ENCODE measurements at regions of chr1 and their contacts with region 1.

Region 1: DNA sequence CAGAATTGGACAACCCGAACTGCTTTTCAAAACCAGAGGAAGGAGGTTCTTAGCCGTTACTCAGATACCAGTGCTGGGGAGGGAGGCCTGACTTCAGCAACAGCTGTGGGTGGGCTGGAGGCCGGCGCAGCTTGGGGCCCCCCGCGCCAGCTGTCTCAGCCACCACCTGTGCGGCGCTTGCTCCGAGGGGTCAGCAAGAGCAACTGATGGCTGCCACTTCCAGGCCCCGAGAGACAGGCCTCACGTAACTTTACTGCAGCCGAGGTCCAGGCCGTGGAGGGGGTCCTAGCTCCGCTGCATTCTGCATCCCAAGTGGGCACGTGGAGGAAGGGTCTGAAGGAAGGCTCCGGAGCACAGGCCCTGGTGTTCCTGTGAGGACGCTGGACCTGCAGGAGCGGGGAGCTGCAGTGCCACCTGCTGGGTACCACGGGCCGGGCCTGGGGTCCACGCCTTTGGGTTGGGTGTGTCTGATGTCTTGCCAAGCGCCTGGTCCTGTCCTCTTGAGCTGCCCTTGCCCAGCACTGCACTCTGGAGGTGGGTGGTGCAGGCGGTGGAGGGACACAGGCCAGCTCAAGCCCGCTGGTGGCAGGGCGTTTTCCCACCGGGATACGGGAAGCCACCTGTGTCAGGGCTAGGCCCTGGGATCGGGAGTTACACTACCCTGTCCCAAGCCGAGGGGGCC is 9.8 kb downstream of the THAP3 start:
- DNase-seq: peak; percentile 80 to 85 (median 84)
- ATAC-seq: peak; percentile 92 to 94 (median 94)
- H3K4me3 ChIP-seq: no peak overlapping the region
- H3K27ac ChIP-seq: no peak overlapping the region
- H3K4me1 ChIP-seq: no peaks in the 10 kb centered on the region
- H3K27me3 ChIP-seq: no peaks in the 10 kb centered on the region
- CTCF ChIP-seq: peak; percentile 59 to 78 (median 68)
- POLR2A ChIP-seq: no peak

Region 2: DNA sequence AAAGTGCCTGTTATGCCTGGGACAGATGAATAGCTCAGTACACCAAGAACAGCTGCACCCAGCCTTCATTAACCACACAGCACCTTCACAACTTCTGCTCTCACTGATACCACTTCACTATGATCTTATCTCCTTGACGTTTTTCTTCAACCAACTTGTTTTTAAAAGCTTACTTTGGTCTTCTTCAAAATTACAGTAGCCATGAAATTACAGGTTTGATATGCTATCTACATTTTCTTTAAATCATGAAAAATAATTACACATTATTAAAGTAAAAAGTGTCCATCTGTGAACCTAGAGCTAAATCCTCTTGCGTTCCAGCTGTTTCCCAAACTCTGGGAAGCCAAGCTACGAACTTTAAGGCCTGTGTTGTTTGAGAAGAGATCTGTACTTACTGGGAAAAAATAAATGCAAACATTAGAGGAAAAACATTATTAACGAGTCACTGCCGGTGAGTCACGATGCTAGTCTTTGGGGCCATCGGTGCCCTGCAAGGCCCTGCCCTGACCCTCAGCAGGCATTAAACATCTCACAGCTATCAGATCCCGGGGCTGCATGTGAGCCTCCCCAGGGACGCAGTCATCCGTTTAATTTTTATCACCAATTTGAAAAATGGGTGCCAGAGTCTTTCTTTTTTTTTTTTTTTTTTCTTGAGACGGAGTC is 317.3 kb before region 1 on chr1:
- intact Hi-C with region 1: no loop called
- DNase-seq: no peak
- ATAC-seq: no peak
- H3K4me3 ChIP-seq: no peak overlapping the region
- H3K27ac ChIP-seq: no peak overlapping the region
- H3K4me1 ChIP-seq: no peaks in the 10 kb centered on the region
- H3K27me3 ChIP-seq: no peaks in the 10 kb centered on the region
- CTCF ChIP-seq: no peak
- POLR2A ChIP-seq: no peak

Region 3: GRCh38 chr1:6489799-6490180 is 144.7 kb before region 1 on chr1:
- intact Hi-C with region 1: loop called in 1 of 2 experiments (anchors 10 kb)
- DNase-seq: peak; percentile 74 to 82 (median 74)
- ATAC-seq: peak; percentile 67 to 77 (median 74)
- H3K4me3 ChIP-seq: peak overlapping the region; percentile 56 to 82 (median 80)
- H3K27ac ChIP-seq: no peak overlapping the region
- H3K4me1 ChIP-seq: peaks cover 0 to 14% (median 0%) of the 10 kb centered on the region in 4 donors
- H3K27me3 ChIP-seq: no peaks in the 10 kb centered on the region
- CTCF ChIP-seq: peak; percentile 83 to 95 (median 94)
- POLR2A ChIP-seq: no peak

Measured in right lobe of liver (tissue), 6 donors.